WTC11 (cell line): ENCODE measurements at regions of chr11 and their contacts with region 1.

Region 1: GRCh38 chr11:4187055-4187988 is 92.7 kb downstream of the RRM1 start:
- DNase-seq: peak; percentile 93
- ATAC-seq: peak; percentile 89
- H3K4me3 Mint-ChIP-seq: peak overlapping the region; percentile 73
- H3K27ac Mint-ChIP-seq: no peak overlapping the region
- H3K4me1 Mint-ChIP-seq: no peaks in the 10 kb centered on the region
- H3K27me3 Mint-ChIP-seq: peaks cover 18% of the 10 kb centered on the region; the same call in 1 of the 2 replicates
- CTCF ChIP-seq: peak; percentile 97

Region 2: GRCh38 chr11:4203603-4204360 is 16.5 kb after region 1 on chr11:
- CTCF ChIA-PET with region 1: interaction called, 28 read pairs
- POLR2A ChIA-PET with region 1: interaction called, 3 read pairs
- DNase-seq: no peak
- ATAC-seq: peak; percentile 100
- H3K4me3 Mint-ChIP-seq: no peak overlapping the region
- H3K27ac Mint-ChIP-seq: no peak overlapping the region
- H3K4me1 Mint-ChIP-seq: peaks cover 4% of the 10 kb centered on the region
- H3K27me3 Mint-ChIP-seq: no peaks in the 10 kb centered on the region
- CTCF ChIP-seq: peak; percentile 17; the same call in 1 of the 2 replicates

Region 3: GRCh38 chr11:4466871-4467442 is 279.6 kb after region 1 on chr11:
- CTCF ChIA-PET with region 1: interaction called, 11 read pairs
- POLR2A ChIA-PET with region 1: no interaction called
- DNase-seq: no peak
- ATAC-seq: no peak
- H3K4me3 Mint-ChIP-seq: no peak overlapping the region
- H3K27ac Mint-ChIP-seq: no peak overlapping the region
- H3K4me1 Mint-ChIP-seq: peaks cover 40% of the 10 kb centered on the region
- H3K27me3 Mint-ChIP-seq: no peaks in the 10 kb centered on the region; the same call in 1 of the 2 replicates
- CTCF ChIP-seq: no peak

Region 4: DNA sequence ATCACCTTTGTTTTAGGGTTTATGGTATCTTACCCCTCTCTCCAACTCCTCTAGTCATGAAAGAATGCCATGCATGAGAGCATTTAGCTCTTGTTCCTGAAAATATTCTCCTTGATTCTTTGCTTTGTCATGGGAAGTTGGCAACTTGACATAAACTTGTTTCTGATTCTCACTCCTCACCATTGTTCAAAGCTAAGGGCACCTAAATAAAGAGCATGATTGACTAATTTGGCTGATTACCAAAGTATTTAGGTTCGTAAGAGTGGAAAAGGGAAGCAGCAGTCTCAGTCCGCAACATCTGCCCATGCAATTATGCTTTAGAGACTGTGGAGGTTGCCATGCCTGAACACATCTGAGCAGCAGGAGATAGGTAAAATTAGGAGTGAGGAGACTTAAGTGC is 321.6 kb after region 1 on chr11:
- CTCF ChIA-PET with region 1: interaction called, 10 read pairs
- POLR2A ChIA-PET with region 1: no interaction called
- DNase-seq: no peak
- ATAC-seq: no peak
- H3K4me3 Mint-ChIP-seq: no peak overlapping the region
- H3K27ac Mint-ChIP-seq: no peak overlapping the region
- H3K4me1 Mint-ChIP-seq: no peaks in the 10 kb centered on the region
- H3K27me3 Mint-ChIP-seq: peaks cover 5% of the 10 kb centered on the region
- CTCF ChIP-seq: no peak

Region 5: DNA sequence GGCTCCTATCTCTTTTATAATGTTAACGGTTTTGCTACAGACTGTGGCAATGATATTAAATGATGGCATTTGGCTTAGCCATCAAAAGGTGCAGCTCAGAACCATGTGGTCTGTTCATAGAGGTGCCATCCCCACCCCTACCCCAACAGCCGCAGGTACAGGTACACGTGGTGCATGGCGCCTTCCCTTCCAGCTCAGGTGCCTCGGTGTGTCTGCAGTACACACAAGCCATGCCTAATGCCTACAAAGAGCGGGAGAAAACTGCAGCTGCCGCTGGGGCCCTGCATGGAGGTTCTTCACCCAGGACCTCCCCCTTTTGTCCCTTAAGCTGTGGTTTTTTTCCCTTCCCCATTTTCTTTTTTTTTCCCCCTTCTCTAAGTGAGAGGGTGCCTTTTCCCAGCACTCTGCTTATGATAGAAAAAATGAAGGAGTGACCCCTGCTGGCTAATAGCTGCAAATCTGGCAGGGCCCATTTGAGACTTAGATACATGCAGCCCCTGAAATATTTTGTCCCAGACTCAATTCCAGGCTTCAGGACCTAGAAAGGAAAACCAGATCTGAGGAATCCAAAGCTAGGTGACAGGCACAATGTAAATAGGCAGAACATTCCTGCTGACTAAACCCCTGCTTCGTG is 364.1 kb after region 1 on chr11:
- CTCF ChIA-PET with region 1: interaction called, 24 read pairs
- POLR2A ChIA-PET with region 1: no interaction called
- DNase-seq: no peak
- ATAC-seq: peak; percentile 93
- H3K4me3 Mint-ChIP-seq: no peak overlapping the region
- H3K27ac Mint-ChIP-seq: no peak overlapping the region
- H3K4me1 Mint-ChIP-seq: no peaks in the 10 kb centered on the region
- H3K27me3 Mint-ChIP-seq: peaks cover 10% of the 10 kb centered on the region
- CTCF ChIP-seq: no peak

Region 6: DNA sequence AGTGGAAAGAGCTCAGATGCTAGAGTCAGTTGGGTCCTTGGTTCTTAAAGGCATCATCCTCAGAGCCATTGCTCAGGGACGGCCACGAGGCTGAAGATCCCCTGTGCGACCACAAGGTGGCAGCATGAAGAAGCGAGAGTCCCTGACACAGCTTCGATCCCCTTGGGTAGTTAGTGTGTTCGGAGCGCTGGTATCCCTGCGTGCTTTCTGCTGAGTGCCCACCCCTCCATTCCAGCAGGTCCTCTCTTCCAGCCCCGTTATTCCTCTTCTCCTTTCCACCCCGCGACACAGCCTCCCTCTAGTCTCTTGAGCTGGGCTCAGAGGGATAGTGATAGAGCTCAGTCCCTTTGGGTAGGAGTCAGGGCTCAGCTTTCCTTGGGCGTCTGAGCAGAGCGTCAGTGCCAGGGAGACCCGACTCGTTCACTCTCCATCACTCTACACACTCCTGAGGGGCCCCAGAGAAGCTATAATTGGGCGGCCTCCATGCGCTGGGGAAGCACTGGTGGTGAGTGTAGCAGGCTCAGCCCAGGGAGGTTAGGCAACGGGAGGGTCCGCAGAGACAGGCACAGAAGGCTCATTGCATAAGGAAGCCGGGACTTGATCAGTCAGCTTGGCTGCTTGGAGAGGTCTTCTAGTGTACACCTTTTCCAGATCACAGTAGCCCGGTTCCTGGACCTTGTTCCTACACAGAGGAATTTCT is 449.8 kb after region 1 on chr11 and contains the start of gene OR51D1:
- CTCF ChIA-PET with region 1: interaction called, 10 read pairs
- POLR2A ChIA-PET with region 1: no interaction called
- DNase-seq: peak; percentile 87
- ATAC-seq: peak; percentile 97
- H3K4me3 Mint-ChIP-seq: no peak within 1 kb of the TSS
- H3K27ac Mint-ChIP-seq: no peak within 1 kb of the TSS
- H3K4me1 Mint-ChIP-seq: peaks cover 9% of the 10 kb centered on the region
- H3K27me3 Mint-ChIP-seq: no peaks in the 10 kb centered on the region
- CTCF ChIP-seq: peak; percentile 92
- total RNA-seq, gene OR51D1: not detected in 3 replicates